ENCODE measurements at regions of chr5 and their contacts with region 1.

Region 1: DNA sequence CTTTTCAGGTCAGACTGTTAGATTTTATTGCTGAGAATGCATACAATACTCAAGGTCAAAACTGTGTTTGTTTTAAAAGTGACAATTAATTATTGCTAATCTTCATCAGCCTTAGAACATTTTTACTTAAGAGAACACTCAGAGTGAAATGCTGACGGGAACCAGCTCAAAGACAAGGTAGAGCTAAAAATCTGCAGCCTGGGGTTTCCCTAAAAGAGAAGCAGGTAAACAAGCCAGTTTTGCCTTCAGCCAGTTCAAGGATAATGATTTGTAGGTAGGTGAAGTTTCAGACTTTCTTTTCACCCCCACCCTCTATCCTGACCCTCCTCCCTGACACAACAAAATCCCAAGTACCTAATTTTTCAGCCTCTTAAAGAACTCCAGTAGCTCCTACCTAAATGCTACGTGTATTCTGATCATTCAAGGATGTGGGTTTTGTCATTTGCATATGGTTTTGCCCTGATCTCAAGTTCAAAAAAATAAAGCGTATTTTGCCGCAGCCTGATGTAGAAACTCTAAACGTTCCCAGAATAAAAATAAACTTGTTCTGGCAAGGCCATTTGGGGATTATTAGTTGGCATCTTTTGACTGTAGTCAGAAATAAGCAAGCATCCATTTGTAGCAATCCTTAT is 407.2 kb downstream of the EFNA5 start:
- DNase-seq: no peak
- ATAC-seq: no peak
- H3K4me3 ChIP-seq: no peak overlapping the region
- H3K27ac ChIP-seq: no peak overlapping the region
- H3K4me1 ChIP-seq: no peaks in the 10 kb centered on the region
- H3K27me3 ChIP-seq: no peaks in the 10 kb centered on the region
- CTCF ChIP-seq: no peak

Region 2: GRCh38 chr5:107184066-107184465 is 79.4 kb before region 1 on chr5:
- CTCF ChIA-PET with region 1: no interaction called
- POLR2A ChIA-PET with region 1: no interaction called
- in situ Hi-C with region 1: no loop called
- intact Hi-C with region 1: no loop called
- DNase-seq: no peak
- ATAC-seq: no peak
- H3K4me3 ChIP-seq: no peak overlapping the region
- H3K27ac ChIP-seq: no peak overlapping the region
- H3K4me1 ChIP-seq: no peaks in the 10 kb centered on the region
- H3K27me3 ChIP-seq: no peaks in the 10 kb centered on the region
- CTCF ChIP-seq: no peak

Region 3: DNA sequence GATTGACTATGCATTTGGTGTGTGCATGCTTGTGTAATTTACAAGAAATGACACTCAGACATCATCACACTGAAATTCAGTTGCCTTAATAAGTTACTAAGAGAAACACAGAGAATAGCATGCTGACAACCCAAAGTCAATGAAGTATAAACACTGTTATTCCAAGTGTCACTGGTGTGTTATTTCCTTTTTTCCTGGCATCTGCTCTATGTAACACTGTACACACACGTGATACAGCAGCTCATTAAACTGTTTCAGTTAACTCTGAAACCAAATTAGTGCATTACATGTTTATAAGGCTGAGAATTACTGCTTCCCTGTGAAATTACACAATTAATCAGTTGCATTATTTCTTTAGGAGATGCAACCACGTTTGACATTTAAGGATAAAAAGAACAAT is 154.6 kb after region 1 on chr5:
- CTCF ChIA-PET with region 1: no interaction called
- POLR2A ChIA-PET with region 1: no interaction called
- in situ Hi-C with region 1: no loop called
- intact Hi-C with region 1: loop called (anchors 10 kb)
- DNase-seq: no peak
- ATAC-seq: no peak
- H3K4me3 ChIP-seq: no peak overlapping the region
- H3K27ac ChIP-seq: no peak overlapping the region
- H3K4me1 ChIP-seq: peaks cover 7% of the 10 kb centered on the region
- H3K27me3 ChIP-seq: no peaks in the 10 kb centered on the region
- CTCF ChIP-seq: no peak